IMR-90 (cell line): ENCODE measurements at regions of chr1 and their contacts with region 1.

Region 1: GRCh38 chr1:17419626-17420328 is 19.7 kb downstream of the RCC2 start:
- DNase-seq: peak; percentile 36
- ATAC-seq: peak; percentile 87
- H3K4me3 ChIP-seq: no peak overlapping the region
- H3K27ac ChIP-seq: no peak overlapping the region
- H3K4me1 ChIP-seq: peaks cover 6% of the 10 kb centered on the region; the same call in 1 of the 2 replicates
- H3K27me3 ChIP-seq: no peaks in the 10 kb centered on the region
- CTCF ChIP-seq: peak; percentile 92
- POLR2A ChIP-seq: no peak
- RAD21 ChIP-seq: peak; percentile 82

Region 2: GRCh38 chr1:17287130-17287776 is 132.5 kb before region 1 on chr1:
- CTCF ChIA-PET with region 1: no interaction called
- POLR2A ChIA-PET with region 1: no interaction called
- dilution Hi-C with region 1: no loop called
- in situ Hi-C with region 1: no loop called
- intact Hi-C with region 1: no loop called
- DNase-seq: peak; percentile 73
- ATAC-seq: peak; percentile 94
- H3K4me3 ChIP-seq: no peak overlapping the region
- H3K27ac ChIP-seq: no peak overlapping the region
- H3K4me1 ChIP-seq: peaks cover 2% of the 10 kb centered on the region
- H3K27me3 ChIP-seq: peaks cover 34% of the 10 kb centered on the region
- CTCF ChIP-seq: no peak
- POLR2A ChIP-seq: no peak
- RAD21 ChIP-seq: no peak

Region 3: DNA sequence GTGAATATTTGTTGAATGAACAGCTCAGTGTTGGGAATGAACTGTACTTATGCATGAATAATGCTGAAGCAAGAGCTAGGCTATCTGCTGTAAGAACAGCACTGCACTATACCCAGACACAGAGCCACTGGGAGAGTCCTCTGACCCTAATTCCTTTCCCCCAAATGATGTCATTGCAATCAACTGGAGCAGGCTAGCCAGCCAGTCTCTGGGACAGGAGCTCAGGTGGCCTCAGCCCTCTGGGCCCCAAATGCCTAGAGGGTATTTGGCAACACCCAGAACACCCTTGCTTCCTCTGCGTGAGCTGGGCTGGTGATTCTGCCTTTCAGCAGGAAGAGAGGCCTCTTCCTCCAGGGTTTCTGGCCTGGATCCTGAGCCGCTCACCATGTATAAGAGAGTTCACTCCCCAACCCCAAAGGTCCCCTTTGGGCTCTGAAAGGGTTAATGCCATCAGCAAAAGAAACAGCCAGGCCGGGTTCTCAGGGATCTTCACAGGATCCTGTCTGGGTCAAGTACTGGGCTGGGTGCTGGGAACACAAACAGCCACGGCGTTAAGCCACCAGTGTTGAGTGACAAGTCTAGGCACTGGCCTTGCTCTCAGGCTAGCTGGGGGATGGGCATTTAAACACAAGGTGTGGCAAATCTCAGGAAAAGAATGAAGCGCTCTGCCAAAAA is 115.5 kb before region 1 on chr1:
- CTCF ChIA-PET with region 1: no interaction called
- POLR2A ChIA-PET with region 1: no interaction called
- dilution Hi-C with region 1: no loop called
- in situ Hi-C with region 1: no loop called
- intact Hi-C with region 1: no loop called
- DNase-seq: no peak
- ATAC-seq: peak; percentile 29; the same call in 1 of the 2 replicates
- H3K4me3 ChIP-seq: no peak overlapping the region
- H3K27ac ChIP-seq: no peak overlapping the region
- H3K4me1 ChIP-seq: no peaks in the 10 kb centered on the region
- H3K27me3 ChIP-seq: peaks cover 28% of the 10 kb centered on the region
- CTCF ChIP-seq: no peak
- POLR2A ChIP-seq: no peak
- RAD21 ChIP-seq: no peak

Region 4: DNA sequence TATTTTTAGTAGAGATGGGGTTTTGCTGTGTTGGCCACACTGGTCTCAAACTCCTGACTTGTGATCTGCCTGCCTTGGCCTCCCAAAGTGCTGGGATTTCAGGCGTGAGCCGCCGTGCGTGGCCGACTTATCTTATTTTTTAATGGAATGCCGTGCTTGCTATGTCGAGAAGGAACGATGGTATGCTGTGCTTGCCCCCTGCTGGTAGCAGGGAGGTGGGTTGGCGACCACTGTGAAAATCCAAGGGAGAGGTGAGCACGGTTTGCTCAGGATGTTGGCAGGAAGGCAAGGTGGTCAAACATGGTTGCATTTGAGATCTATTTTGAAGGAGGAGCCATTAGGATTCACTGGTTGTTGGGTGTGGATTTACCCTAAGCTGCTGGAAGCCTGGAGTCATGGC is 65.5 kb after region 1 on chr1:
- CTCF ChIA-PET with region 1: no interaction called
- POLR2A ChIA-PET with region 1: no interaction called
- dilution Hi-C with region 1: no loop called
- in situ Hi-C with region 1: no loop called
- intact Hi-C with region 1: loop called (anchors 2 kb)
- DNase-seq: peak; percentile 10
- ATAC-seq: no peak
- H3K4me3 ChIP-seq: no peak overlapping the region
- H3K27ac ChIP-seq: no peak overlapping the region
- H3K4me1 ChIP-seq: peaks cover 4% of the 10 kb centered on the region; the same call in 1 of the 2 replicates
- H3K27me3 ChIP-seq: peaks cover 3% of the 10 kb centered on the region
- CTCF ChIP-seq: peak; percentile 42
- POLR2A ChIP-seq: no peak
- RAD21 ChIP-seq: peak; percentile 49